ENCODE measurements at regions of chr20 and their contacts with region 1.

Region 1: GRCh38 chr20:19915111-19915798 is 101.9 kb upstream of the NAA20 start:
- DNase-seq: peak; percentile 47
- ATAC-seq: peak; percentile 66
- H3K4me3 ChIP-seq: no peak overlapping the region
- H3K4me3 Mint-ChIP-seq: peak overlapping the region; percentile 6
- H3K27ac ChIP-seq: no peak overlapping the region
- H3K27ac Mint-ChIP-seq: peak overlapping the region; percentile 57
- H3K4me1 ChIP-seq: peaks cover 33 to 47% of the 10 kb centered on the region in 2 donors
- H3K4me1 Mint-ChIP-seq: peaks cover 50% of the 10 kb centered on the region
- H3K27me3 ChIP-seq: no peaks in the 10 kb centered on the region
- H3K27me3 Mint-ChIP-seq: no peaks in the 10 kb centered on the region
- CTCF ChIP-seq: no peak

Region 2: DNA sequence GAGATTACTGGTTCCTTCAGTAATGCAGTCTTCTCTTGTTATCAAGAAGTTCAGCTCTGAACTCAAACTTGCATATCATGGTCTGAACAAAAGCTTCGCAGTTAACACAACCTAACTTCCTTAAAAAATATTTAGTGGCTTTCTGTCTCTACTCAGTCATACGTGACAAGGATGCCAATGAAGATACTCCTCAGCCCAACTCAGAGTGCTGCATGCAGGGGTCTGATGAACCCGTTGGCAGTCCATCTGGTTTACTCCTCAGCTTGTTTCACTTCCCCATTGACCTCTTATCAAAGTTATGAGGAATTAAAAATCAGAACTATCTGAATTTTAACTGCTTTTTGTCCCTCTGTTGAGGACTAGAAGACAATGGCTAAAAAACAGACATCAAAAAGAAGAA is 213.8 kb before region 1 on chr20:
- CTCF ChIA-PET with region 1: no interaction called
- POLR2A ChIA-PET with region 1: no interaction called
- intact Hi-C with region 1: loop called (anchors 5 kb)
- DNase-seq: peak; percentile 81
- ATAC-seq: peak; percentile 85
- H3K4me3 ChIP-seq: peak overlapping the region in 1 of 5 experiments; percentile 2
- H3K4me3 Mint-ChIP-seq: peak overlapping the region; percentile 33
- H3K27ac ChIP-seq: peak overlapping the region in 1 of 2 donors; percentile 44
- H3K27ac Mint-ChIP-seq: peak overlapping the region; percentile 59
- H3K4me1 ChIP-seq: peaks cover 52 to 53% of the 10 kb centered on the region in 2 donors
- H3K4me1 Mint-ChIP-seq: peaks cover 44% of the 10 kb centered on the region
- H3K27me3 ChIP-seq: no peaks in the 10 kb centered on the region
- H3K27me3 Mint-ChIP-seq: no peaks in the 10 kb centered on the region
- CTCF ChIP-seq: no peak

Region 3: GRCh38 chr20:19934792-19935491 is 19.7 kb after region 1 on chr20:
- CTCF ChIA-PET with region 1: interaction called, 5 read pairs
- POLR2A ChIA-PET with region 1: interaction called, 3 read pairs
- intact Hi-C with region 1: loop called (anchors 2 kb)
- DNase-seq: peak; percentile 81
- ATAC-seq: peak; percentile 64
- H3K4me3 ChIP-seq: peak overlapping the region in 4 of 5 experiments; percentile 14 to 57 (median 36)
- H3K4me3 Mint-ChIP-seq: peak overlapping the region; percentile 78
- H3K27ac ChIP-seq: peak overlapping the region; percentile 31 to 39
- H3K27ac Mint-ChIP-seq: peak overlapping the region; percentile 32
- H3K4me1 ChIP-seq: peaks cover 31 to 34% of the 10 kb centered on the region in 2 donors
- H3K4me1 Mint-ChIP-seq: peaks cover 46% of the 10 kb centered on the region
- H3K27me3 ChIP-seq: no peaks in the 10 kb centered on the region
- H3K27me3 Mint-ChIP-seq: no peaks in the 10 kb centered on the region
- CTCF ChIP-seq: no peak

Region 4: GRCh38 chr20:19995220-19995863 is 80.1 kb after region 1 on chr20:
- CTCF ChIA-PET with region 1: interaction called, 11 read pairs
- POLR2A ChIA-PET with region 1: no interaction called
- intact Hi-C with region 1: no loop called
- DNase-seq: peak; percentile 74
- ATAC-seq: peak; percentile 45
- H3K4me3 ChIP-seq: no peak overlapping the region
- H3K4me3 Mint-ChIP-seq: no peak overlapping the region
- H3K27ac ChIP-seq: no peak overlapping the region
- H3K27ac Mint-ChIP-seq: no peak overlapping the region
- H3K4me1 ChIP-seq: no peaks in the 10 kb centered on the region
- H3K4me1 Mint-ChIP-seq: no peaks in the 10 kb centered on the region
- H3K27me3 ChIP-seq: no peaks in the 10 kb centered on the region
- H3K27me3 Mint-ChIP-seq: peaks cover 10% of the 10 kb centered on the region
- CTCF ChIP-seq: peak; percentile 94

Region 5: GRCh38 chr20:20052074-20052970 is 137.1 kb after region 1 on chr20 and contains the starts of genes CFAP61 and CRNKL1:
- CTCF ChIA-PET with region 1: no interaction called
- POLR2A ChIA-PET with region 1: no interaction called
- intact Hi-C with region 1: no loop called
- DNase-seq: peak; percentile 99
- ATAC-seq: peak; percentile 93
- H3K4me3 ChIP-seq: peak within 1 kb of the TSS; percentile 85 to 98 (median 97)
- H3K4me3 Mint-ChIP-seq: peak within 1 kb of the TSS; percentile 99
- H3K27ac ChIP-seq: peak within 1 kb of the TSS; percentile 78 to 91
- H3K27ac Mint-ChIP-seq: peak within 1 kb of the TSS; percentile 97
- H3K4me1 ChIP-seq: peaks cover 7 to 14% of the 10 kb centered on the region in 2 donors
- H3K4me1 Mint-ChIP-seq: peaks cover 23% of the 10 kb centered on the region
- H3K27me3 ChIP-seq: peaks cover 0 to 9% (median 5%) of the 10 kb centered on the region in 4 experiments
- H3K27me3 Mint-ChIP-seq: peaks cover 7% of the 10 kb centered on the region
- CTCF ChIP-seq: no peak
- total RNA-seq, gene CFAP61: not detected in 2 replicates
- total RNA-seq, gene CRNKL1: 25.5 and 32.1 TPM in 2 replicates